ENCODE measurements at regions of chr2 and their contacts with region 1.

Region 1: DNA sequence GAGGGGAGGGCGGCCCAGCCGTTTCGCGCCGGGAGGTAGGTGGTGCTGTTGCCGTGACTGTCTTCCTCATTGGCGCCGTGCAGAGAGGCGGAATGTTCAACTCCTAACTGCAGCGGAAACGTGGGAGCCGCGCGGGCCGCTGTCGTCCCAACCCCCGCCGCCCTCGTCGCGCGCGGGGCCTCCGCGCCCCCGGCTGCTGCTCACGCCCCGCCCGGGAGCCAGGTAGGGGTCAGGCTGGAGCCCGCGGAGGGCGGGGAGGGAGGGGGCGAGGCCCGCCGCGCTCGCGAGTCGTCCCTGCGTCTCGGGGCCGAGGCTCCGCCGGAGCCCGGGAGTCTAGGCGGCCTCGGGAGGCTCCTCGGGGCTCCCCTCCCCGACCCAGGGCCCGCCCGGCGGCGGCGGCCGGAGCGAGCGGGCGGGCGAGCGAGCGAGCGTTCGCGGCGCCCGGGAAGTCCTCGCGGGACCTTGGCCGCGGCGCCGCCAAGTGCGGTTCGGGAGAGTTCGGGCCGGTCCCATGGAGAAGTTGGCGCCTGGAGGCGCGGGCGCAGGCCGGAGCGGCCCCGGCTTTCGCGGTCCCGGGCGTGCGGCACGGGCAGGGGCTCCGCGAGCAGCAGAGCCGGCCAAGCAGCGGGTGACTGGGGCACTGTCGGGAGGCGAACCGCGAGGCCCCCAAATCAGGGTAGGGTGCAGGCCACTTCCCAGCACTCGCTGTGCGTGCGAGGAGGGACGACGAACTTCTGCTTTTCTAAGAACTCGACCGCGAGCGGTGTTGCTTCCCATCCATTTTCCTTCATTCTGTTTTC is at the start of gene MAP3K20:
- DNase-seq: peak; percentile 75
- H3K4me3 ChIP-seq: peak within 1 kb of the TSS; percentile 78 to 92
- H3K27ac ChIP-seq: peak within 1 kb of the TSS; percentile 90 to 94
- H3K4me1 ChIP-seq: no peaks in the 10 kb centered on the region
- H3K27me3 ChIP-seq: no peaks in the 10 kb centered on the region
- CTCF ChIP-seq: peak in 3 of 4 experiments; percentile 58 to 70 (median 69)
- POLR2A ChIP-seq: peak; percentile 63
- total RNA-seq, gene MAP3K20: 28.9 to 48.8 TPM

Region 2: GRCh38 chr2:172972005-172972619 is 103.9 kb before region 1 on chr2:
- intact Hi-C with region 1: loop called (anchors 10 kb)
- DNase-seq: no peak
- H3K4me3 ChIP-seq: no peak overlapping the region
- H3K27ac ChIP-seq: no peak overlapping the region
- H3K4me1 ChIP-seq: no peaks in the 10 kb centered on the region
- H3K27me3 ChIP-seq: no peaks in the 10 kb centered on the region
- CTCF ChIP-seq: peak in 1 of 4 experiments; percentile 41
- POLR2A ChIP-seq: no peak

Region 3: GRCh38 chr2:173027181-173028128 is 48.5 kb before region 1 on chr2:
- intact Hi-C with region 1: loop called (anchors 5 kb)
- DNase-seq: peak; percentile 93
- H3K4me3 ChIP-seq: no peak overlapping the region
- H3K27ac ChIP-seq: peak overlapping the region; percentile 38 to 41
- H3K4me1 ChIP-seq: no peaks in the 10 kb centered on the region
- H3K27me3 ChIP-seq: no peaks in the 10 kb centered on the region
- CTCF ChIP-seq: peak; percentile 95 to 97 (median 95)
- POLR2A ChIP-seq: no peak

Region 4: DNA sequence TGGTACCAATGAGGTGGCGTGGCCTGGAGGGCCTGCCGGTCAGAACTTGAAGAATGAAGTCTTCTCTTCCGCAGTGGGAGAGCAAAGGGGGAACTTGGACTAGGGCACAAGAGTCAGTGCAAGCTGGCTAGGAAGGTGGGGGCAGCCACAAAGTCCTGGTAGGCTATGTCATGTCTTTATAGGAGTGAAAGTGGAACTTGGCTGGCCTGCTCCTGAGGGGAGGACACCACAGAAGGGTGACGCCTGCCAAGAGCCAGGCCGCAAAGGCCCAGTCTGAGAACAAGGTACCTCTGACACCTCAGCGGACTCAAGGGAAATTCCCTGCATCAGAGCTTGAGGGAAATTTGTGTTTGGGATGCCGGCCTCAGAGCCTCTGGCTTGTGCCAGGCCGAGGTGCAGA is 32.5 kb before region 1 on chr2:
- intact Hi-C with region 1: loop called (anchors 5 kb)
- DNase-seq: peak; percentile 24
- H3K4me3 ChIP-seq: no peak overlapping the region
- H3K27ac ChIP-seq: no peak overlapping the region
- H3K4me1 ChIP-seq: no peaks in the 10 kb centered on the region
- H3K27me3 ChIP-seq: no peaks in the 10 kb centered on the region
- CTCF ChIP-seq: no peak
- POLR2A ChIP-seq: no peak

Region 5: DNA sequence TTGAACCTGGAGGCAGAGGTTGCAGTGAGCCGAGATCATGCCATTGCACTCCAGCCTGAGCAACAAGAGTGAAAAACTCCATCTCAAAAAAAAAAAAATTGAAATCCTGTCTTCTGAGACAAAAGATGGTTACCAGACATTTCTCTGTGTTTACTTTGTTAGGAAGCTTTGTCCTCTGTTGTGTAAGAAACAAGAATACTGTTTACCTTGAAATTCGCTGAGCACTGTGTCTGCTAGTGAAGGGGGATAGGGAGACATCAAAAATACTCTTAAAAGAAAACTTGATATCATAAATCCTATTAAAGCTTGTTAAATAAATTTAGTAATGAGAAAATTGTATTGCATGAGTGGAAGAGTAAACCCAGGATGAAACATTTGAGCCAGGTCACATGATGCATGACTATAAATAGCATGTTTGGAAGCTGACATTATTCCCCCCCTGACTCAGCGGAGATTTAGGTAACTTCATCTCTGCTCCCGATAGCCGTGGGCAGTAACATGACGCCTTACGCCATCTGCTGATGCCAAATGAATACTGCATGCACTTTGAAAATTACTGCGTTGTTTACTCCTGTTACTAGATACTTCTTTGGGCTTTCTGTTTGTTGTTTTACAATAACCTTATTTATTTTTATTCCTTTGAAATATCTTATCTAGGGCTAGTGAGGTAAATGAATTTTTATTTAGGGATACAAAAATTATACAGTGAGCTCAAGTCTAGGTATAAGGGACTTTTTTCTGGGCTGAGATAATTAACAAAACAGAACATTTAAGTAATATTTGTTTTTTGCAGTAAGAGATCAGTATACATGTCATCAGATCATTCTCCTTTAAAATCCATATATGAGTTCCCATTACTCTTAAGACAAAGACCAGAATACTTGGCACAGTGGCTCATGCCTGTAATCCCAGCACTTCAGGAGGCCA is 134.6 kb after region 1 on chr2:
- intact Hi-C with region 1: loop called (anchors 2 kb)
- DNase-seq: peak; percentile 83
- H3K4me3 ChIP-seq: no peak overlapping the region
- H3K27ac ChIP-seq: peak overlapping the region; percentile 50 to 66
- H3K4me1 ChIP-seq: no peaks in the 10 kb centered on the region
- H3K27me3 ChIP-seq: no peaks in the 10 kb centered on the region
- CTCF ChIP-seq: peak; percentile 83 to 92 (median 90)
- POLR2A ChIP-seq: no peak

Region 6: GRCh38 chr2:173286153-173286809 is 210.3 kb after region 1 on chr2:
- intact Hi-C with region 1: loop called (anchors 10 kb)
- DNase-seq: no peak
- H3K4me3 ChIP-seq: no peak overlapping the region
- H3K27ac ChIP-seq: no peak overlapping the region
- H3K4me1 ChIP-seq: no peaks in the 10 kb centered on the region
- H3K27me3 ChIP-seq: no peaks in the 10 kb centered on the region
- CTCF ChIP-seq: no peak
- POLR2A ChIP-seq: no peak